AG04450 (cell line): ENCODE measurements at regions of chr9 and their contacts with region 1.

Region 1: GRCh38 chr9:122816163-122816867 is 12.1 kb downstream of the PDCL start:
- DNase-seq: no peak
- H3K4me3 ChIP-seq: no peak overlapping the region
- H3K27ac ChIP-seq: no peak overlapping the region
- H3K27me3 ChIP-seq: no peaks in the 10 kb centered on the region
- CTCF ChIP-seq: no peak

Region 2: GRCh38 chr9:122827761-122828093 is 11.4 kb after region 1 on chr9:
- CTCF ChIA-PET with region 1: no interaction called
- POLR2A ChIA-PET with region 1: interaction called, 13 read pairs
- DNase-seq: no peak
- H3K4me3 ChIP-seq: peak overlapping the region; percentile 99
- H3K27ac ChIP-seq: peak overlapping the region; percentile 99
- H3K27me3 ChIP-seq: no peaks in the 10 kb centered on the region
- CTCF ChIP-seq: no peak

Region 3: GRCh38 chr9:123225374-123225813 is 409.1 kb after region 1 on chr9:
- CTCF ChIA-PET with region 1: no interaction called
- POLR2A ChIA-PET with region 1: no interaction called
- DNase-seq: peak; percentile 47
- H3K4me3 ChIP-seq: no peak overlapping the region
- H3K27ac ChIP-seq: no peak overlapping the region
- H3K27me3 ChIP-seq: no peaks in the 10 kb centered on the region
- CTCF ChIP-seq: peak; percentile 69